ENCODE measurements at regions of chr14 and their contacts with region 1.

Region 1: GRCh38 chr14:32076278-32077080 is 625 bp upstream of the ARHGAP5 start:
- DNase-seq: peak; percentile 93 to 96
- ATAC-seq: peak; percentile 87 to 89
- H3K4me3 ChIP-seq: peak overlapping the region; percentile 89 to 99 (median 96)
- H3K27ac ChIP-seq: peak overlapping the region; percentile 98 to 100 (median 100)
- H3K4me1 ChIP-seq: peaks cover 27 to 42% of the 10 kb centered on the region in 2 donors
- H3K27me3 ChIP-seq: no peaks in the 10 kb centered on the region
- CTCF ChIP-seq: no peak
- POLR2A ChIP-seq: peak; percentile 64 to 65

Region 2: DNA sequence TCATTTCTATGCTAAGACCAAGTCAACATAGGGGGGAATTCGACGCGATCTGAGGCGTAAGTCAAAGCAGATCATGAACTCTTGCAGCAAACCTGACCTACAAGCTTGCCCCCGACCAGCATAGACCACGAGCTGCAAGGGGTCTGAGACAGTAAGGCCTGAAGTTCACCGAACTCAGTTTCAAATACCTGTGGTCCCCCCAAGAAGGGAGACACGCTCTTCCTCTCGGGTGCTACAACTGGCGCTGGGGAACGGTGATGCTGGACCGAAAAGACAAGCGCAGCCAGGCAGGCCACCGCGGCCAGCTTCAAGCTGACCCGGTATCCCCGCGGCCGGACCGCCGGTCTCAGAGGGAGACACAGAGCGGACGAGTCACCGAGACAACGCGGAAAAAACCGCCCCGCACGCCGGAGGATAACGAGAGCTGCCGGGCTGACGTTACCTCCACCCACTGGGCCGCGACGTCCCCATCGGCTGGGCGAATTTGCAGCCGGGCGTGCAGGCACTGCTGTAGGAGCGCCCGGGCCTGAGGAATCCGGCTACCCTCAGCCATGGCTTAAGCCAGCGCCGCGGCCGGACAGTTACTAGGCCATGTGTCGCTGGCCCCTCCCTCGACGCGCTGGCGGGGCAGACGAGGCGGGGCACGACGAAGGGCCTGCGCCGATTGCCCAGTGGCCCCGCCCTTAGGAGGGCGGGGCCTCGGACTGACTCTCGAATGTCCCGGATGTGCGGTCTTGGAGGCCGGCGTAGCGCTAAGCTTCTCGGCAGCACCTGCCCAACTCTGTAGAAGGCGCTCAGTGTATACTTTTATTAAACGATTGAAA is 619.4 kb before region 1 on chr14 and contains the start of gene DTD2:
- in situ Hi-C with region 1: no loop called
- intact Hi-C with region 1: loop called (anchors 2 kb)
- DNase-seq: peak; percentile 89 to 93
- ATAC-seq: peak; percentile 97 to 98
- H3K4me3 ChIP-seq: peak within 1 kb of the TSS; percentile 68 to 79 (median 74)
- H3K27ac ChIP-seq: peak within 1 kb of the TSS; percentile 85 to 90 (median 89)
- H3K4me1 ChIP-seq: peaks cover 9 to 11% of the 10 kb centered on the region in 2 donors
- H3K27me3 ChIP-seq: no peaks in the 10 kb centered on the region
- CTCF ChIP-seq: no peak
- POLR2A ChIP-seq: peak; percentile 56 to 80
- total RNA-seq, gene DTD2: 4.0 to 7.8 (median 4.8) TPM

Region 3: GRCh38 chr14:31926123-31926522 is 150.4 kb before region 1 on chr14:
- in situ Hi-C with region 1: no loop called
- intact Hi-C with region 1: loop called (anchors 5 kb)
- DNase-seq: no peak
- ATAC-seq: no peak
- H3K4me3 ChIP-seq: no peak overlapping the region
- H3K27ac ChIP-seq: peak overlapping the region in 3 of 4 donors; percentile 69 to 74 (median 70)
- H3K4me1 ChIP-seq: peaks cover 18 to 23% of the 10 kb centered on the region in 2 donors
- H3K27me3 ChIP-seq: no peaks in the 10 kb centered on the region
- CTCF ChIP-seq: peak in 4 of 5 experiments; percentile 31 to 53 (median 40)
- POLR2A ChIP-seq: no peak

Region 4: GRCh38 chr14:32560209-32560857 is 483.9 kb after region 1 on chr14:
- in situ Hi-C with region 1: loop called in 2 of 4 experiments (anchors 25 kb)
- intact Hi-C with region 1: loop called (anchors 2 kb)
- DNase-seq: peak; percentile 45 to 51
- ATAC-seq: peak; percentile 80 to 94
- H3K4me3 ChIP-seq: no peak overlapping the region
- H3K27ac ChIP-seq: peak overlapping the region in 2 of 4 donors; percentile 8 to 14
- H3K4me1 ChIP-seq: peaks cover 34 to 48% of the 10 kb centered on the region in 2 donors
- H3K27me3 ChIP-seq: no peaks in the 10 kb centered on the region
- CTCF ChIP-seq: peak; percentile 62 to 92 (median 87)
- POLR2A ChIP-seq: no peak

Region 5: DNA sequence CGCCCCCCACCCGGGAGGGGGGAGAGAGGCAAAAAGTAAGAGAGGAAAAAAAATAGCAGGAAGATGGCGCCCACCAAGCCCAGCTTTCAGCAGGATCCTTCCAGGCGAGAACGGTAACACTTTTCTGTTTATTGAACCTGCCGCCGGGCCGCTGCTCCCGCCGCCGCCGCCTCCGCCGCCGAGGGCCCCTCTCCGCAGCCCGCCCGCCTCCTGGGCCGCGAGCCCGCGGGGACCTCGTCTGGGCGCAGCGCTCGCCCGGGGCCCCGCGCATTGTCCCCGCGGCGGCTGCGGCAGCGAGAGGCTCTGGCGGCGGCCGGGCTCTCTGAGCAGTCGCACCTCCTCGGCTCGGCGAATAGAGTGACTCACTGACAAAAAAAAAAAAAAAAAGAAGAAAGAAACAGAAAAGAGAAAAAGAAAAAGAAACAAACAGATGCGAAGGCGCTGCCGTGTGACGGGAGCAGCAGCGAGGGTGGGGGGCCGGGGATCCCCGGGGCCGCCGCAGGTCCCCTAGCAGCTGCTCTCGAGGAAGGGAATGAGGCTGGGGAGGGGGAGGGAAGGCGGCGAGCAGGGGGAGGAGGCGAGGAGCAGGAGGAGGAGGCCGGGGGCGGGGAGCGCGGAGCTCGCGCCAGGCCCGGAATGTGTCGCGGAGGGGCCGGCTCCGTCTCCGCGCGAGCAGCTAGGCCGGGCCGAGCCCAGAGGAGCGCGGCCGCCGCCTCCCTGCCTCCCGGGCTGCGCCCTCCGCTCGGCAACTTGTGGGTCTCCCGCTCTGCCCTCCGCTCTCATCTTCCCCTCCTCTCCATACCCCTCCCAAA is 863.0 kb after region 1 on chr14:
- in situ Hi-C with region 1: no loop called
- intact Hi-C with region 1: loop called (anchors 10 kb)
- DNase-seq: peak; percentile 63 to 65
- ATAC-seq: peak; percentile 60 to 73
- H3K4me3 ChIP-seq: peak overlapping the region; percentile 61 to 72 (median 70)
- H3K27ac ChIP-seq: peak overlapping the region; percentile 66 to 82 (median 74)
- H3K4me1 ChIP-seq: peaks cover 9 to 16% of the 10 kb centered on the region in 2 donors
- H3K27me3 ChIP-seq: peaks cover 4 to 34% (median 12%) of the 10 kb centered on the region in 3 donors
- CTCF ChIP-seq: no peak
- POLR2A ChIP-seq: no peak